Heart right ventricle (tissue), 16 donors: ENCODE measurements at regions of chr3 and their contacts with region 1.

Region 1: DNA sequence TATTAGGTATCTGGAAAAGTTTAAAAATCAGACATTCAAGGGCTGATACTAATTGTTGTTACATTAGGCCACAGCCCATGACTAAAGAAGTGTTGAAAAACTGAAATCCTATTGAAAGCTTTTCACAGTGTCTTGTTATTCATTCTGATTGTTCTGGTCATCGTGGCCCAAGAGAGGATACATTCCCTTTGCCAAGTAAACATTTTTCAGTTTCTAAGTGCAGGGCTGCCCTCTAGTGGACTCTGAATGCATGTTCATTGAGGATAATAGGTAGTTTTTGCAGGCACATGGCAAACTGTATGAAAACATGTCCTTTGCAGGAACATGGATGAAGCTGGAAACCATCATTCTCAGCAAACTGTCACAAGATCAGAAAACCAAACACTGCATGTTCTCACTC is 181.1 kb downstream of the MYRIP start:
- DNase-seq: no peak
- ATAC-seq: no peak
- H3K4me3 ChIP-seq: no peak overlapping the region
- H3K27ac ChIP-seq: no peak overlapping the region
- H3K4me1 ChIP-seq: no peaks in the 10 kb centered on the region
- H3K27me3 ChIP-seq: no peaks in the 10 kb centered on the region
- CTCF ChIP-seq: peak in 8 of 9 donors; percentile 8 to 55 (median 40)

Region 2: GRCh38 chr3:39707314-39707909 is 283.1 kb before region 1 on chr3:
- intact Hi-C with region 1: loop called in 1 of 10 experiments (anchors 5 kb)
- DNase-seq: no peak
- ATAC-seq: peak in 1 of 8 donors; percentile 39
- H3K4me3 ChIP-seq: no peak overlapping the region
- H3K27ac ChIP-seq: no peak overlapping the region
- H3K4me1 ChIP-seq: no peaks in the 10 kb centered on the region
- H3K27me3 ChIP-seq: no peaks in the 10 kb centered on the region
- CTCF ChIP-seq: peak; percentile 32 to 78 (median 72)

Region 3: GRCh38 chr3:39724233-39724846 is 266.2 kb before region 1 on chr3:
- intact Hi-C with region 1: loop called in 2 of 10 experiments (anchors 10 kb)
- DNase-seq: no peak
- ATAC-seq: peak in 1 of 8 donors; percentile 37
- H3K4me3 ChIP-seq: no peak overlapping the region
- H3K27ac ChIP-seq: no peak overlapping the region
- H3K4me1 ChIP-seq: no peaks in the 10 kb centered on the region
- H3K27me3 ChIP-seq: no peaks in the 10 kb centered on the region
- CTCF ChIP-seq: peak in 8 of 9 donors; percentile 15 to 55 (median 48)

Region 4: GRCh38 chr3:40043444-40043755 is 52.9 kb after region 1 on chr3:
- intact Hi-C with region 1: no loop called
- DNase-seq: no peak
- ATAC-seq: no peak
- H3K4me3 ChIP-seq: no peak overlapping the region
- H3K27ac ChIP-seq: no peak overlapping the region
- H3K4me1 ChIP-seq: no peaks in the 10 kb centered on the region
- H3K27me3 ChIP-seq: peaks cover 0 to 5% (median 0%) of the 10 kb centered on the region in 7 donors
- CTCF ChIP-seq: no peak